Posterior vena cava (tissue), 2 donors: ENCODE measurements at regions of chr3 and their contacts with region 1.

Region 1: DNA sequence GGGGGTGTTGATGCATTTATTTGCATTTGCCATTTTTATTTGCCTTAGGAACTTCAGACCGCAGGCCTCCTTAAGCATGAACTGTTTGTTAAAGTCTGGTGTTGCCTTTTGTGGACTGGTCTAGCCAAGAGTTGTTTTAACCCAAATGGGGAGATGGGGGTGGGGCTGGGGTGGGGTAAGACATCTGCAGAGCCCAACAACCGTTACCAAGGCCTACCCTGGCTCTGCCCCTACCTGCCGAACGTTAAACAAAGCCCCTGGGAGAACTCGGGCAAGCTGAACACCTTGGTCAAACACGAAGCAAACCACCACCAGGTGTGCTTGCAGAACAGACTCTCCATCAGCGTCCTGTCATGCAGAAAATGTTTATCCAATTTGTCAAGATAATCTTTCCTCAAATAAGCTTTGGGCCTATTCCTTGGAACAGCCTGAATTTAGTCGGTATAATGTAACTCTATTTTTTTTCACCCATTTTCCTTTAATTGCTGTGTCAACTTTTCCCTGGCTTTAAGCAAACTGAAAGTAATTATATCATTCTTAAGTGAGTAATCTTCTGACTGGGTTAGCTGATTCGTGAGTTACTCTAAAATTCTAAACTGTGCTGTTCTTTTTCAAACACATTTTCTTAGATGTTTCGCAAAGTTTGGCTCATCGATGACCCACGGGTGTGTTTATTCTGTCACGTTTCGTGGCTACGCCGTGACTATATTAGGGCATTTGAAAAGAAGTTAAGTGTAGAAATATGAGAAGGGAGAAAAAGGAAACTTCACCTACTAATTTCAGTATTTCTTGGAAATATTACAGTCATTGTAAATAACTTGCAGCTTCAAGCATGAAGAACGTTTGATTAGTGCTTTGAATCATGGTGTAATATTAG is 127.6 kb downstream of the SOX2 start:
- DNase-seq: no peak

Region 2: DNA sequence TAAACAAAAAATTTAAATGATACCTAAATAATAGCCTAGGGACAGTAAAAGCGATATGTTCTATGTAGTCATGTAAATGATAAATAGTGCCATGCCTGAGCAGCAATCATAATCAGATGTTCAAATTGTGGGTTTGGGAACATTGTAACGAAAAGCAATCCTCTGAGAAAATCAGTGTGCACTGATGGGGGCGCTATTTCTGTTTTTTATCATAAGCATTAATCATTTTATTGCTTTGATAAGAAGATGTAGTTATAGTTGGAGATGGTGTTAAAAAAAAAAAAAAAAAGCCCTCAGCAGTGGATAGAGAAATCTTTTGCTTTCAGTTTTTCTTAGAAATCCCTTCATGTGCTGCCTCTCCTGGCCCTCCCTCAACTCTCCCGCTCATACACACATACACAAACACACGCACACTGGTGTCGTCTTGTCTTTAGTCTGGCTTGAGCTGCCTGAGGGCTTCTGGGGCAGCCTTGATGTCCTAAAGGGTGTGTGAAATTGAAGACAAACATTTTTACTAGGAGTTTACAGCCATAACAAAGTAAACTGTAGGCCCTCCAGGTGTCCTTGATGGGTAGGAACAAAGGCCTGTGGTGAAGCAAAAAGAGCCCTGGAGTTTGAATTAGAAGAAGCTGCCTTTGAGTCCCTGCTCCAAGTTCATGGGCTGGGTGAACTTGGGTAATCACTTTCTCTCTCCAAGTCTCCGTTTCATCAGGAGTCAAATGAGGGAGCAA is 300.5 kb after region 1 on chr3:
- intact Hi-C with region 1: loop called in 1 of 2 experiments (anchors 2 kb)
- DNase-seq: no peak